ENCODE measurements at regions of chr20 and their contacts with region 1.

Region 1: GRCh38 chr20:40160097-40160550 is 528.9 kb downstream of the MAFB start:
- DNase-seq: peak in 1 of 2 donors; percentile 33
- ATAC-seq: peak; percentile 52 to 53
- H3K4me3 ChIP-seq: no peak overlapping the region
- H3K27ac ChIP-seq: no peak overlapping the region
- H3K4me1 ChIP-seq: no peaks in the 10 kb centered on the region
- H3K27me3 ChIP-seq: no peaks in the 10 kb centered on the region
- CTCF ChIP-seq: peak; percentile 22 to 59 (median 36)
- POLR2A ChIP-seq: no peak

Region 2: DNA sequence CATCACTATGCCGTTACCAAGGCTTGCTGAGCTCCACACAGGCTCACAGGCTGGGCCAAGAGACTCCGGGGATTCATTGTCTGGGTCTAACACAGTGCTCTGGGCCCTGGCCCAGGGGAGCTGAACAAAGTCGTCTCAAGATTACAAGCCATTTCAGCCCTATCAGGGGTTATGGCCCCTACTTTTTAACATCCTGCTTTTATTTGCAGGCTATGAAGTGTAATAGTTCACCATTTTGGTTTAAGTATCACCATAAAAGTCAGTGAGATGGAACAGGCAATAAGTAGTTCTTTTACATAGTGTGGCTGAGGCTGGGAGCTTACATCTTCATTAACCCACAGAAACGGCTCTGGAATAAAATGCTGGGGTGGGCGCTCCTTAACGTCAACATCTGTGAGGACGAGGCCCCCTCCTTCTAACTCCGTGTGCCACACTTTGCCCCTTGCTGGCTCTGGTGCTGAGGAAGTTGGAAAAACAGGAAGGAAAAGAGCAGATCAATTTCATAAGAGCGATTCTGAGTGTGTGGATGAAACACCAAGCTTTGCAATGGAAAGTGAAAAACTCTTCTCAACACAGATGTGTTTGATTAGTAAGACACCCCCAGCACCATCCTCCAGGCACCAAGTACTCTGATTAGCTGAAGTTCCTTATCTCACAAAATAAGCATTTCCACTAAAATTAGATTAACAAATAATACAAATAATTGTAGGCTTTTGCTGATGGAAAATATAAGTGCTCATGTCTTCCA is 81.6 kb after region 1 on chr20:
- in situ Hi-C with region 1: no loop called
- intact Hi-C with region 1: loop called (anchors 10 kb)
- DNase-seq: no peak
- ATAC-seq: no peak
- H3K4me3 ChIP-seq: no peak overlapping the region
- H3K27ac ChIP-seq: no peak overlapping the region
- H3K4me1 ChIP-seq: no peaks in the 10 kb centered on the region
- H3K27me3 ChIP-seq: no peaks in the 10 kb centered on the region
- CTCF ChIP-seq: no peak
- POLR2A ChIP-seq: no peak